HepG2 (cell line): ENCODE measurements at regions of chr17 and their contacts with region 1.

Region 1: GRCh38 chr17:47895856-47896671 is at the start of gene SP2:
- DNase-seq: peak; percentile 100
- ATAC-seq: peak; percentile 95
- H3K4me3 ChIP-seq: peak within 1 kb of the TSS; percentile 79 to 96 (median 83)
- H3K27ac ChIP-seq: peak within 1 kb of the TSS; percentile 88
- H3K4me1 ChIP-seq: peaks cover 37% of the 10 kb centered on the region
- H3K27me3 ChIP-seq: no peaks in the 10 kb centered on the region; a peak in 1 of 5 replicates
- CTCF ChIP-seq: peak; percentile 23; the same call in 1 of the 2 replicates
- EP300 ChIP-seq: no peak
- POLR2A ChIP-seq: peak; percentile 74 to 91
- RAD21 ChIP-seq: peak; percentile 69
- total RNA-seq, gene SP2: 1.4 and 1.5 TPM in 2 replicates

Region 2: GRCh38 chr17:47810901-47811778 is 84.9 kb before region 1 on chr17:
- CTCF ChIA-PET with region 1: no interaction called
- POLR2A ChIA-PET with region 1: no interaction called
- in situ Hi-C with region 1: no loop called
- intact Hi-C with region 1: no loop called
- DNase-seq: no peak
- ATAC-seq: no peak
- H3K4me3 ChIP-seq: no peak overlapping the region
- H3K27ac ChIP-seq: no peak overlapping the region
- H3K4me1 ChIP-seq: peaks cover 12% of the 10 kb centered on the region
- H3K27me3 ChIP-seq: no peaks in the 10 kb centered on the region
- CTCF ChIP-seq: no peak
- EP300 ChIP-seq: no peak
- POLR2A ChIP-seq: no peak
- RAD21 ChIP-seq: no peak

Region 3: DNA sequence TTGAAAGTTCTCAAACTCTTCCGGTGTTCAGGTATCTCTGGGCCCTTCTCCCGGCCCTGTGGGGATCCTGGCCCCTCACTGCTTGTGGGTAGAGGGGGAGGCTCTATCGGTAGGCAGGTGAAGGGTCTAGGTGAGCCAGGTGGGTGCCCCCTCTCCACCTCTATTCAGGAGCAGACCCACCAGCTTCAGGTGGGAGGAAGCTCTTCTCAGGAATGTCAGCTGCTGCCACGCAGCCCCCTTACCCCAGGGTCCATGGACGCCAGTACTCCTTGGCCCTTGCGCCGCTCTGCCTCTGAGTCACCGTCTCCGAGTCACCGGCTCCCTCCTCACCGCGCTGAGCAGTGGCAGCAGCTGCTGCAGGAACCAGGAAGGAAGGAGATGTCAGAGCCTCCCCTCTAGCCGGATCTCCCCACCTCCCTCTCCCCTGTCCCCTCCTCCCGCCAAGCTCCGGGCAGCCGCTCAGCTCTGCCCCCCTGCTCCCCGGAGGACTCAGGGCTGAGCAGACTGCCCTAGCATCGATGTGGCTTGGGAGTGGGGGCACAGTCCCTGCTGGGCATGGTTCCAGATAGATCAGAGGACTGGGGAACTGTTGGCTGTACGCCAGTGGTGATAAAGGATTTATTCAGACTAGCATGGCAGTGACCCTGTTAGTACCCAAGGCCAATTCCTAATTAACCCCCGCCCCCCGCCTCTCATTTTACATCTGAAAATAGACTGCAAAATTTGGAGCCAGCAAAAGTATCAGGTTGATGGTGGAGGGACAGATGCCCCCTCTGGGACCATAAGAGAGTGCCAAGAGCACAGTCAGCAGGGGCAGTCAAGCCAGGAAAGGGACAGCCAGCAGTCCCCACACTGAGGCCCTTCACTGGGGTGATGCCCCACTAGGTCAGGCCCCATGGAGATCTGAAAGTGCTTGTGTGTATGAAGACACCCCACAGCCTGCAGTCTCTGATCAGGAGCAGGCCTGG is 74.4 kb before region 1 on chr17 and contains the start of gene OSBPL7:
- CTCF ChIA-PET with region 1: no interaction called
- POLR2A ChIA-PET with region 1: interaction called, 17 read pairs
- in situ Hi-C with region 1: no loop called
- intact Hi-C with region 1: no loop called
- DNase-seq: peak; percentile 76
- ATAC-seq: peak; percentile 96
- H3K4me3 ChIP-seq: peak within 1 kb of the TSS; percentile 73 to 90 (median 73)
- H3K27ac ChIP-seq: peak within 1 kb of the TSS; percentile 5
- H3K4me1 ChIP-seq: peaks cover 19% of the 10 kb centered on the region
- H3K27me3 ChIP-seq: no peaks in the 10 kb centered on the region; a peak in 1 of 5 replicates
- CTCF ChIP-seq: peak; percentile 95
- EP300 ChIP-seq: 0 out of 4 replicates have a peak, but pooled peaks of 1 of the 2 experiments have one; percentile 29
- POLR2A ChIP-seq: peak; percentile 52 to 83; a peak in 3 of 4 replicates
- RAD21 ChIP-seq: no peak
- total RNA-seq, gene OSBPL7: 1.0 and 4.7 TPM in 2 replicates

Region 4: GRCh38 chr17:47840740-47841603 is 55.1 kb before region 1 on chr17 and contains the start of gene SCRN2:
- CTCF ChIA-PET with region 1: interaction called, 162 read pairs
- POLR2A ChIA-PET with region 1: interaction called, 56 read pairs
- in situ Hi-C with region 1: loop called (anchors 5 kb)
- intact Hi-C with region 1: loop called (anchors 1 kb)
- DNase-seq: peak; percentile 87
- ATAC-seq: peak; percentile 86
- H3K4me3 ChIP-seq: peak within 1 kb of the TSS; percentile 80 to 95 (median 84)
- H3K27ac ChIP-seq: peak within 1 kb of the TSS; percentile 66
- H3K4me1 ChIP-seq: peaks cover 72% of the 10 kb centered on the region
- H3K27me3 ChIP-seq: no peaks in the 10 kb centered on the region; a peak in 1 of 5 replicates
- CTCF ChIP-seq: peak; percentile 99
- EP300 ChIP-seq: 0 out of 4 replicates have a peak, but pooled peaks of 1 of the 2 experiments have one; percentile 15
- POLR2A ChIP-seq: peak; percentile 40 to 78; a peak in 3 of 4 replicates
- RAD21 ChIP-seq: peak; percentile 99
- total RNA-seq, gene SCRN2: 15.0 and 29.5 TPM in 2 replicates

Region 5: GRCh38 chr17:47882247-47882646 is 13.8 kb before region 1 on chr17:
- CTCF ChIA-PET with region 1: no interaction called
- POLR2A ChIA-PET with region 1: interaction called, 36 read pairs
- in situ Hi-C with region 1: no loop called
- intact Hi-C with region 1: no loop called
- DNase-seq: no peak
- ATAC-seq: no peak
- H3K4me3 ChIP-seq: no peak overlapping the region
- H3K27ac ChIP-seq: no peak overlapping the region
- H3K4me1 ChIP-seq: peaks cover 41% of the 10 kb centered on the region
- H3K27me3 ChIP-seq: peaks cover 10 to 62% of the 10 kb centered on the region in 2 experiments; a peak in 4 of 5 replicates
- CTCF ChIP-seq: no peak
- EP300 ChIP-seq: no peak
- POLR2A ChIP-seq: no peak
- RAD21 ChIP-seq: no peak

Region 6: DNA sequence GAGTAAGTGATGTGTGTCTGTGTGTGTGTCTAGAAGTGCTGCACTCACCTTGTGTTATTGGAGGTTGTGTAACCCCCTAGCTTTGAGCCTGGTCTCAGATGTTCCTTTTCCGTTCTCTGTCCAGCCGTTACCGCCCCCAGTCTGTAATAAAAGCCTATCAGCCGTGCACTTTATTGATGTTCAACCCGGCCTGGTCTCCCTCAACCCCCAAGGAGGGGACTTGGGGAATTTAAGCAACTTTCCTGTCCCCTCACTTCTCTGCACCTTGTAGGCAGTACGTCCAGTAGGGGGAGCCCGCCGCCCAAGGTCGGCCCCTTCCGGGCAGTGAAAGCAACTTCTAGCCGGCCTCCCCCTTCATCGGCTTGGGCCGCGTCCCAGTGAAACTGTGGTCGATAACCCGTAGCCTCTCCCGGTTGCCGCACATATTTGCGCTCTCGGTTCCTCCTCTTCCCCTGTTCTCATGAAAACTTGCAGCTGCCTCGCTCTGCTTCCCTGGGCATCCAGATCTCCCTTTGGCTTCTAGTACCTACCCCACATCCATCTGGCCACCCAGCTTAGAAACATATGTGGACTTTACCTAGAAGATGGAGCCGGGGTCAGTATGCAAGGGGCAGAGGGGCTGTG is 53.2 kb after region 1 on chr17:
- CTCF ChIA-PET with region 1: no interaction called
- POLR2A ChIA-PET with region 1: interaction called, 17 read pairs
- in situ Hi-C with region 1: no loop called
- intact Hi-C with region 1: loop called (anchors 1 kb)
- DNase-seq: peak; percentile 80
- ATAC-seq: peak; percentile 78
- H3K4me3 ChIP-seq: peak overlapping the region; percentile 18 to 43 (median 28); a peak in 5 of 6 replicates
- H3K27ac ChIP-seq: peak overlapping the region; percentile 76
- H3K4me1 ChIP-seq: peaks cover 91% of the 10 kb centered on the region
- H3K27me3 ChIP-seq: no peaks in the 10 kb centered on the region
- CTCF ChIP-seq: peak; percentile 98
- EP300 ChIP-seq: peak in 1 of 2 experiments; percentile 37; a peak in 1 of 4 replicates
- POLR2A ChIP-seq: no peak; a peak in 1 of 4 replicates
- RAD21 ChIP-seq: peak; percentile 97

Region 7: GRCh38 chr17:47970704-47971463 is 74.8 kb after region 1 on chr17 and contains the start of gene CDK5RAP3:
- CTCF ChIA-PET with region 1: interaction called, 9 read pairs
- POLR2A ChIA-PET with region 1: interaction called, 53 read pairs
- in situ Hi-C with region 1: no loop called
- intact Hi-C with region 1: loop called (anchors 1 kb)
- DNase-seq: peak; percentile 99
- ATAC-seq: peak; percentile 97
- H3K4me3 ChIP-seq: peak within 1 kb of the TSS; percentile 66 to 95 (median 92)
- H3K27ac ChIP-seq: peak within 1 kb of the TSS; percentile 63
- H3K4me1 ChIP-seq: peaks cover 51% of the 10 kb centered on the region
- H3K27me3 ChIP-seq: no peaks in the 10 kb centered on the region; a peak in 1 of 5 replicates
- CTCF ChIP-seq: peak; percentile 100
- EP300 ChIP-seq: 0 out of 4 replicates have a peak, but pooled peaks of 1 of the 2 experiments have one; percentile 62
- POLR2A ChIP-seq: peak; percentile 92 to 95
- RAD21 ChIP-seq: peak; percentile 99
- total RNA-seq, gene CDK5RAP3: 86.8 and 128 TPM in 2 replicates

Region 8: GRCh38 chr17:48084932-48085444 is 188.9 kb after region 1 on chr17:
- CTCF ChIA-PET with region 1: no interaction called
- POLR2A ChIA-PET with region 1: no interaction called
- in situ Hi-C with region 1: no loop called
- intact Hi-C with region 1: no loop called
- DNase-seq: no peak
- ATAC-seq: no peak
- H3K4me3 ChIP-seq: no peak overlapping the region
- H3K27ac ChIP-seq: no peak overlapping the region
- H3K4me1 ChIP-seq: no peaks in the 10 kb centered on the region
- H3K27me3 ChIP-seq: no peaks in the 10 kb centered on the region
- CTCF ChIP-seq: no peak
- EP300 ChIP-seq: no peak
- POLR2A ChIP-seq: no peak
- RAD21 ChIP-seq: no peak

Region 9: GRCh38 chr17:48241131-48241591 is 345.1 kb after region 1 on chr17:
- CTCF ChIA-PET with region 1: no interaction called
- POLR2A ChIA-PET with region 1: no interaction called
- in situ Hi-C with region 1: no loop called
- intact Hi-C with region 1: no loop called
- DNase-seq: no peak
- ATAC-seq: no peak
- H3K4me3 ChIP-seq: no peak overlapping the region
- H3K27ac ChIP-seq: no peak overlapping the region
- H3K4me1 ChIP-seq: no peaks in the 10 kb centered on the region
- H3K27me3 ChIP-seq: 0 out of 5 replicates have a peak, but pooled peaks cover 0 to 4% of the 10 kb centered on the region in 2 experiments
- CTCF ChIP-seq: no peak
- EP300 ChIP-seq: no peak
- POLR2A ChIP-seq: no peak
- RAD21 ChIP-seq: no peak